Activated B cell treated with CpG ODN at 0.5 μM for 24 hours (primary cell): ENCODE measurements at regions of chr3 and their contacts with region 1.

Region 1: DNA sequence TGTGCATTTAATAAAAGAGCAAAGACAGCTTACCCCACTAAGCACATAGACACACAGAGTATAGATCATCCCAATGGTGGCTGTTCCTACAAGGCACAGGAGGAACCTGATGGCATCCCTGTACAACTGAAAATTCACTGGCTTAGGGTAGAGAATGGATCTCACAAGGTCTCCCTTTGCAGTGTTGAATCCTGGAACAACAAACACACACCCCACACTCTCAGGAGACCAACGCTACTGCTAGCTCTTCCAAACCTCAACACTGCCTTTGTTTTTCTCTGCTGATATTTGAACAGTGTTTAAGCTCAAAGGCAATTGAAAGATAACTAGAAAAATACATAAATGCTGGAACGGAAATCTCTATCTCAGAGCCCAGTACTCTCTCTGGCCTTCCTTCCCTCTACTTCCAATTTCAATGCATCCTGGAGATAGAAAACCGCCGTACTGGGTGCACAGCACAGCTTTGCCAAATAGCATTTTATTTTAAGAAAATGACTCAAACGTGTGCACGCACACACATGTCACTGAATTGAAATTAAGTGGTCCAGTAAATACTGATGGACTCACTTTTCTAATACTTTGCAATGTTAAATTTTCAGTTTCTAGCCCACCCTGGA is 87.5 kb upstream of the ATP13A5 start:
- DNase-seq: no peak
- ATAC-seq: no peak
- H3K4me3 Mint-ChIP-seq: no peak overlapping the region
- H3K27ac Mint-ChIP-seq: no peak overlapping the region
- H3K4me1 Mint-ChIP-seq: no peaks in the 10 kb centered on the region
- H3K27me3 Mint-ChIP-seq: peaks cover 1% of the 10 kb centered on the region
- CTCF ChIP-seq: no peak

Region 2: GRCh38 chr3:192367616-192368015 is 1098.5 kb before region 1 on chr3:
- CTCF ChIA-PET with region 1: no interaction called
- POLR2A ChIA-PET with region 1: interaction called, 11 read pairs
- intact Hi-C with region 1: no loop called
- DNase-seq: no peak
- ATAC-seq: no peak
- H3K4me3 Mint-ChIP-seq: no peak overlapping the region
- H3K27ac Mint-ChIP-seq: no peak overlapping the region
- H3K4me1 Mint-ChIP-seq: no peaks in the 10 kb centered on the region
- H3K27me3 Mint-ChIP-seq: peaks cover 2% of the 10 kb centered on the region
- CTCF ChIP-seq: no peak

Region 3: GRCh38 chr3:192566706-192567290 is 899.3 kb before region 1 on chr3:
- CTCF ChIA-PET with region 1: no interaction called
- POLR2A ChIA-PET with region 1: no interaction called
- intact Hi-C with region 1: loop called (anchors 5 kb)
- DNase-seq: no peak
- ATAC-seq: no peak
- H3K4me3 Mint-ChIP-seq: no peak overlapping the region
- H3K27ac Mint-ChIP-seq: no peak overlapping the region
- H3K4me1 Mint-ChIP-seq: peaks cover 8% of the 10 kb centered on the region
- H3K27me3 Mint-ChIP-seq: peaks cover 15% of the 10 kb centered on the region
- CTCF ChIP-seq: peak; percentile 17

Region 4: GRCh38 chr3:193314161-193314560 is 151.9 kb before region 1 on chr3:
- CTCF ChIA-PET with region 1: no interaction called
- POLR2A ChIA-PET with region 1: no interaction called
- intact Hi-C with region 1: no loop called
- DNase-seq: no peak
- ATAC-seq: no peak
- H3K4me3 Mint-ChIP-seq: no peak overlapping the region
- H3K27ac Mint-ChIP-seq: no peak overlapping the region
- H3K4me1 Mint-ChIP-seq: no peaks in the 10 kb centered on the region
- H3K27me3 Mint-ChIP-seq: no peaks in the 10 kb centered on the region
- CTCF ChIP-seq: no peak

Region 5: GRCh38 chr3:193572426-193572908 is 106.4 kb after region 1 on chr3:
- CTCF ChIA-PET with region 1: interaction called, 11 read pairs
- POLR2A ChIA-PET with region 1: interaction called, 3 read pairs
- intact Hi-C with region 1: loop called (anchors 1 kb)
- DNase-seq: no peak
- ATAC-seq: peak; percentile 52
- H3K4me3 Mint-ChIP-seq: no peak overlapping the region
- H3K27ac Mint-ChIP-seq: no peak overlapping the region
- H3K4me1 Mint-ChIP-seq: no peaks in the 10 kb centered on the region
- H3K27me3 Mint-ChIP-seq: no peaks in the 10 kb centered on the region
- CTCF ChIP-seq: peak; percentile 54

Region 6: GRCh38 chr3:193620650-193621049 is 154.6 kb after region 1 on chr3:
- CTCF ChIA-PET with region 1: no interaction called
- POLR2A ChIA-PET with region 1: no interaction called
- intact Hi-C with region 1: no loop called
- DNase-seq: no peak
- ATAC-seq: no peak
- H3K4me3 Mint-ChIP-seq: no peak overlapping the region
- H3K27ac Mint-ChIP-seq: no peak overlapping the region
- H3K4me1 Mint-ChIP-seq: no peaks in the 10 kb centered on the region
- H3K27me3 Mint-ChIP-seq: no peaks in the 10 kb centered on the region
- CTCF ChIP-seq: no peak

Region 7: GRCh38 chr3:193640165-193640715 is 174.1 kb after region 1 on chr3:
- CTCF ChIA-PET with region 1: no interaction called
- POLR2A ChIA-PET with region 1: no interaction called
- intact Hi-C with region 1: no loop called
- DNase-seq: no peak
- ATAC-seq: no peak
- H3K4me3 Mint-ChIP-seq: no peak overlapping the region
- H3K27ac Mint-ChIP-seq: no peak overlapping the region
- H3K4me1 Mint-ChIP-seq: no peaks in the 10 kb centered on the region
- H3K27me3 Mint-ChIP-seq: no peaks in the 10 kb centered on the region
- CTCF ChIP-seq: no peak

Region 8: DNA sequence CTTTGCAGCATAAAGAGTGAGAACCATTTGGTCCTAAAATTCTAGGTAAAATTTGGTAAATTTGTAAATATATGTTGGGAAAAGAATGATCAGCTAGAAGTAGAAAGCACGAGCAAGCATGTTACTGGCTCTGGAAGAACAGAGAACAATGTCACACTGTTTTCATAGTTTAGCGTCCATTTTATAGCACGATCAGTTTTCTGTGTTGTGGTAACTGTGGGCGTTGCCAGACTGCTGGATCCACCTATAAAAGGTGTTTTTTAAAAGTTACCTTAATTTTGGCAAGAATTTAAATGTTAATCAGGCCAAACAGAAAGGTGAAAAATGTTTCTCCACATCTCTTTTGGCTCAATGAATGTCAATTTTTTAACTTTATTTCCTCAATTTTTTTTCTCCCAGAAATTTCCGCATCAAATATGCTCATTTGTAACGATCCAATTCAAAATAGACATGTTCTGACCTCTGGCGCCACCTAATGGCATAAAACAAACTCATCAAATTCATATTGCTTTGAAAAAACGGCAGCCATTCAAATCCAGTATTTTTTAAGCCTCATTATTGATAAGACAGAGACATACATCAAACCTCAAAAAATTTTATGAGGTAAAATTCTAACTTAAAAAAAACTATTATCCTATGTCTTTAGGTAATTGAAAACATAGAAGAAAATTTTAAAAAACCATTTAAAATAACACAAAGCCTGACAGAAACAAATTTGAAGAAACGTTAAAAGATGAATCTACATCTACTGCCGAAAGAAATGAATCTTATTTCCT is 938.5 kb after region 1 on chr3:
- CTCF ChIA-PET with region 1: no interaction called
- POLR2A ChIA-PET with region 1: no interaction called
- intact Hi-C with region 1: loop called (anchors 5 kb)
- DNase-seq: no peak
- ATAC-seq: no peak
- H3K4me3 Mint-ChIP-seq: no peak overlapping the region
- H3K27ac Mint-ChIP-seq: no peak overlapping the region
- H3K4me1 Mint-ChIP-seq: peaks cover 2% of the 10 kb centered on the region
- H3K27me3 Mint-ChIP-seq: peaks cover 5% of the 10 kb centered on the region
- CTCF ChIP-seq: peak; percentile 58